Dendritic cell treated with granulocyte-macrophage colony-stimulating factor and Interleukin-4, amounts not matched to agents 40 ng/mL and 50 ng/mL, for 4 days (primary cell): ENCODE measurements at regions of chr12 and their contacts with region 1.

Region 1: DNA sequence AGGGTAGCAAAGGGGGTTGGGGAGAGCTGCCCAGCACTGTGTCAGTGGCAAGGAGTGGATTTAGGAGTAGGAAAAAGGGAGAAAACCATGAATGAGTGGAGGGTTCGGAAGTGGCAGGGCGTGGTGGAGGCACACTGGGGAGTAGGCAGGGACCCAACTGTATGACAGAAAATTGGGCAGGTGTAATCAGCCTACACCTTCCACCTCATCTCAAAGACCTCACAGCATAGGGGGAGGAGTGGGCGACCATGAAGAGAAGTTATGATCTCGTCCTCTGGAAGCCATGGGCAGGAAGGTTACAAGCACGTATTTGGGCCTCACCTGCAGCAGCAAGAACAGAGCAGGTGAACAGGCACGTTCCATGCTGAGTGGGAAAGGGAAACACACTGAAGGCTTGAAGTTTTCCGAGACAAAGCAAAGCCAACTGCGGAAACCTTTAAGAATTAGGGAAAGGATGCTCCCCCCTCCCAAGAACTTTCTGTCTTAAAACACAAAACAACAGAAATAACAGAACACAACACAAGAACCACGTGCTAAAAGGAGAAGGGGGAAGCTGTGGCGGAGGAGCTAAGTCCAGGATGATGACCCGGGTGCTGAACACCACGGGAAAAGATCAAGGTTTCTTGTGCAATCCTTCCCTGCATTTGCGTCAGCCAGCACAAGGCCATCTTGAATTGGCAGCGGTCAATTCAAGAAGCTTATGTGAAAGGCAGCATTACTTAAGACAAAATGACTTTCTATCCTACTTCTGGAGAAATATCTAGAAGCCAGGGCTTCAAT is 11.2 kb upstream of the CREBL2 start:
- H3K4me3 Mint-ChIP-seq: no peak overlapping the region
- H3K27ac Mint-ChIP-seq: peak overlapping the region; percentile 48
- H3K4me1 Mint-ChIP-seq: peaks cover 28% of the 10 kb centered on the region
- H3K27me3 Mint-ChIP-seq: peaks cover 3% of the 10 kb centered on the region

Region 2: DNA sequence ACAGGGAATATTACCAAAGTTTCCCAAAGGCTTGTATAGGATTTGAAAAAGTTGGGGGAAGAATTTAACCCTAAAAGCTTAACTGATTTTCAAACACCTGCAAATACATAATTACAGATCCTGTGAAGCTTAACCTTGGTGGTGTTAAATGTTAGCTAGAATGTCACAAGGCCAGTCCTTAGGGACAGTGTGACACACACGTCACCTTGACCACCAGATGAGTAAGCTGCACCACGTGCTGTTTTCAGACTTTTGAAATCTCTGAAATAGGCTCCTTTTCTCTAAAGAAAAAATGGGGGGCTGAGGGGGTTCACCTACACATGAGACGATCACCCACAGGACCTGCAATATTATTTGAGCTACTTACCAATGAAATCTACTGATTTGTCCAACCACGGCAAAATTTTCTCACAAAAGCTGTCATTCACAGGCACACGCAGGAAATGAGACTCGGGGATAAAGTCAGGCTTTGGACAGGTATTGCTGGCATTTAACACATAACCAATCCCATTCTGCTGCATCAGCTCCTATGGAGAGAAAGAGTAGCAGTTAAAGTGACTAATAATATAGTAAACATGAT is 113.7 kb before region 1 on chr12:
- intact Hi-C with region 1: no loop called
- H3K4me3 Mint-ChIP-seq: no peak overlapping the region
- H3K27ac Mint-ChIP-seq: no peak overlapping the region
- H3K4me1 Mint-ChIP-seq: peaks cover 16% of the 10 kb centered on the region
- H3K27me3 Mint-ChIP-seq: no peaks in the 10 kb centered on the region

Region 3: DNA sequence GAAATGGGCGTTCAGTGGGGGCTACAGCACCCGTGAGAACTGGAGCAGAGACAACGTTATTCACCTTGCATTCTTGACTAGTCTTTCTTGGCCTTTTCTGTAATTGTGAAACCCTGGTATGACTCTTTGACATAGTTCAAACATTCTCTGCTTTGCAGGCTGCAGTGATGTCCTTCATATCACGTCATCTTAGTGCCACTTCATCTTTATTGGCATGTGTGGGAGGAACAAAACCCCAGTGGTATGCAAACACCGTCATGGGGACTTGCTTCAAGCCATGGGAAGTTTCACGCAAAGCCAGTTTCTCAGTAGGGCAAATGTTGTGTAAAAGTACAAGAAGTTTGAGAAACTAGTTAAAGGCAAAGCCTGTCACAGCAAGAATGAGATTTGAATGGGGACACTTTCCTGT is 17.5 kb before region 1 on chr12:
- intact Hi-C with region 1: loop called (anchors 2 kb)
- H3K4me3 Mint-ChIP-seq: no peak overlapping the region
- H3K27ac Mint-ChIP-seq: no peak overlapping the region
- H3K4me1 Mint-ChIP-seq: peaks cover 31% of the 10 kb centered on the region
- H3K27me3 Mint-ChIP-seq: no peaks in the 10 kb centered on the region